Heart left ventricle (tissue), 16 donors: ENCODE measurements at regions of chr1 and their contacts with region 1.

Region 1: GRCh38 chr1:208461680-208462079 is 217.5 kb upstream of the PLXNA2 start:
- DNase-seq: no peak
- ATAC-seq: no peak
- H3K4me3 ChIP-seq: no peak overlapping the region
- H3K27ac ChIP-seq: no peak overlapping the region
- H3K4me1 ChIP-seq: no peaks in the 10 kb centered on the region
- H3K27me3 ChIP-seq: no peaks in the 10 kb centered on the region
- CTCF ChIP-seq: peak in 1 of 12 donors; percentile 19
- POLR2A ChIP-seq: no peak

Region 2: DNA sequence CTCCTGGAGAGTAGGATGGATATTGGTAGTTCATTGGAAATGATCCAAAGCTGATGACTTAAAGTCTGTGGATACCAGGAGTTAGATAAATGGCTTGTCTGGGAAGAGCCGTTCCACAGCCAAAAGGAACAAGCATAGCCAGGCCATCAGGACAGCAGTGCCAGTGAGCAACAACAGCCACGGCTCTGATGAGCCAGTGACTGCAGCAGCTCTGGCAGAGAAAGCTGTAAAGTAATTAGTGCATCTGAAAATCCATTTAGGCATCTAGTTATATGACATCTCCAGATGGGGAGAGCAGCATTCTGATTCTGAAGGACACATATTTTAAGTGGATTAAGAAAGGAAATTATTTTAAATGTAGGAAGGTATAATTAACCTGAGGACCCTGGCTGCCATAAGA is 38.7 kb after region 1 on chr1:
- intact Hi-C with region 1: loop called in 1 of 10 experiments (anchors 2 kb)
- DNase-seq: no peak
- ATAC-seq: no peak
- H3K4me3 ChIP-seq: no peak overlapping the region
- H3K27ac ChIP-seq: no peak overlapping the region
- H3K4me1 ChIP-seq: no peaks in the 10 kb centered on the region
- H3K27me3 ChIP-seq: peaks cover 0 to 3% (median 0%) of the 10 kb centered on the region in 9 donors
- CTCF ChIP-seq: no peak
- POLR2A ChIP-seq: no peak